ENCODE measurements at regions of chr16 and their contacts with region 1.

Region 1: DNA sequence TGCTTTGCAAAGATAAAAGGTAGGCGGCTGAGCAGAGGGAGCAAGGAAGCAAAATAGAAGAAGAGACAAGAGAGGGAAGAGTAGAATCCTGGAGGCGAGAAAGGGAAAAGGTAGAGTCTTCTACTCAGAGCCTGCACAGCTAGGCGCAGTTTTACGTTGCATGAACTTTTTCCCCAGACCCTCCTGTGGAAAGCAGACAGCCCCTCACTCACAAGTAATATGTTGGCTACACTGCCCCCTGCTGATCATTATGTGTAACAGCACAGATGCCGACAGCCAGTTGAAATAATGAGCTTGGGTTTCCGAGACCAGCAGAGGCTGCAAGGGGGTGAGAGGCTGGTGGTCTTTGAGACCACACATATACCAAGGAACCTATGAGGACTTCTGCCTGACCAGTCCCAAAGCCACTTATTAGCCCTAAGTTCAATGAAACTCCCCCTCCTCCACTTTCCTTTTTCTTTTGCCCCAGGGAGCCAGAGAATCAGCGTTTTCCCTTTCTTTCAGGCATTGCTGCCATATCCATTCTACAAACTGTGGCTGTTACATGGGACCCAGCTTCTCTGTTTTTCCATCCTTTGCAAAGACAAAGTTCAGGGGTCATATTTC is 22.5 kb upstream of the CMTR2 start:
- H3K4me3 ChIP-seq: no peak overlapping the region
- H3K27ac ChIP-seq: no peak overlapping the region
- H3K4me1 ChIP-seq: no peaks in the 10 kb centered on the region
- CTCF ChIP-seq: peak; percentile 55

Region 2: DNA sequence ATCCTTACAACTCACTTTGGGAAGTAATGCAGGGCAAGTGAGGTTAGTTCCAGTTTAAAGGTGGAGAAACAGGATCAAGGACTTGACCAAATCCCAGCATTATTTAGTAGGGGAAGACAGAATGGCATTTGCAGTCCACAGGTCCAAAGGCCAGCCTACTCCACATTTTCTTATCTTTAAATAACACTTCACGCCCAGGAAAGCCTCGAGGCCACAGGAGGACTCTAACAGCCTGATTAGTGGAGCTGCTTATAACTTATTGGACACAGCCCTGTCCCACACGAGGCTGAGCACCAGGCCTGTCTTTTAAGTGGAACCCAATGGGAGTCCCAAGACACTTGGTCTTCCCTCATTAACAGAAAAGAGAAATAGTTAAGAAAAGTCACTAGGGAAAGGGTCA is 69.1 kb before region 1 on chr16:
- CTCF ChIA-PET with region 1: no interaction called
- POLR2A ChIA-PET with region 1: no interaction called
- H3K4me3 ChIP-seq: no peak overlapping the region
- H3K27ac ChIP-seq: no peak overlapping the region
- H3K4me1 ChIP-seq: no peaks in the 10 kb centered on the region
- CTCF ChIP-seq: no peak

Region 3: GRCh38 chr16:71297341-71297634 is 14.4 kb before region 1 on chr16:
- CTCF ChIA-PET with region 1: interaction called, 15 read pairs
- POLR2A ChIA-PET with region 1: no interaction called
- H3K4me3 ChIP-seq: no peak overlapping the region
- H3K27ac ChIP-seq: no peak overlapping the region
- H3K4me1 ChIP-seq: no peaks in the 10 kb centered on the region
- CTCF ChIP-seq: no peak

Region 4: GRCh38 chr16:71328151-71328550 is 16.5 kb after region 1 on chr16:
- CTCF ChIA-PET with region 1: interaction called, 12 read pairs
- POLR2A ChIA-PET with region 1: no interaction called
- H3K4me3 ChIP-seq: no peak overlapping the region
- H3K27ac ChIP-seq: no peak overlapping the region
- H3K4me1 ChIP-seq: no peaks in the 10 kb centered on the region
- CTCF ChIP-seq: no peak